Sigmoid colon (tissue), 7 donors: ENCODE measurements at regions of chr11 and their contacts with region 1.

Region 1: DNA sequence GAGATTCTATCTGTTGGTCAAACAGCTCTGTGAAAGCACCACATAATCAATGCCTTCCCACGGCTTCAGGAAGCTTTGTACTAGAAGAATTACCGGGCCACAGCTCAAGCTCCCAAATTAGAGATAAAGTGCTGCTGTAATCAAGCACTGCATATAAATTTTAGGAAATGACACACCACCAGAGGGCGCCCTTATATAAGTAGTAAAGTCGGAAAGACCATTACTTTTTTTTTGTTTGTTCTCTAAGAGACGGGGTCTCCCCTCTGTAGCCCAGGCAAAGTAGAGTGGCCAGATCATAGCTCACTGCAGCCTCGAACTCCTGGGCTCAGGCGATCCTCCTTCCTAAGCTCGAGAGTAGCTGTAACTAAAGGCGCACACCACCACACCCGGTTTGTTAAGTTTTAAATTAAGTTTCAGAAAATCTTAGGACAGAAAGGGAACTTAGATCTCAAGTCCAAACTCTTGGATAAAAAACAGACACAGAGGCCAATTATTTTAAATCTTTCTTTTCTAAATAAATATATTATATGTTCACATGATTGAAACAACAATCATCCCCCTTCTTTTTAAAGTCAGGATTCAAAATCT is 32.6 kb downstream of the PRCP start:
- DNase-seq: peak; percentile 83
- H3K4me3 ChIP-seq: peak overlapping the region in 2 of 4 donors; percentile 10 to 21
- H3K27ac ChIP-seq: no peak overlapping the region
- H3K4me1 ChIP-seq: peaks cover 0 to 37% (median 8%) of the 10 kb centered on the region in 4 donors
- H3K27me3 ChIP-seq: no peaks in the 10 kb centered on the region
- CTCF ChIP-seq: peak in 3 of 4 experiments; percentile 50 to 78 (median 51)
- EP300 ChIP-seq: no peak
- POLR2A ChIP-seq: no peak

Region 2: GRCh38 chr11:82733444-82734119 is 134.0 kb before region 1 on chr11 and contains the start of gene FAM181B:
- intact Hi-C with region 1: loop called (anchors 5 kb)
- DNase-seq: peak; percentile 72
- H3K4me3 ChIP-seq: peak within 1 kb of the TSS; percentile 36 to 60 (median 53)
- H3K27ac ChIP-seq: peak within 1 kb of the TSS; percentile 35 to 66 (median 64)
- H3K4me1 ChIP-seq: peaks cover 0 to 14% (median 11%) of the 10 kb centered on the region in 4 donors
- H3K27me3 ChIP-seq: peaks cover 11 to 55% (median 42%) of the 10 kb centered on the region in 3 donors
- CTCF ChIP-seq: no peak
- EP300 ChIP-seq: no peak
- POLR2A ChIP-seq: no peak
- total RNA-seq, gene FAM181B: 0.83 to 1.4 (median 0.97) TPM

Region 3: DNA sequence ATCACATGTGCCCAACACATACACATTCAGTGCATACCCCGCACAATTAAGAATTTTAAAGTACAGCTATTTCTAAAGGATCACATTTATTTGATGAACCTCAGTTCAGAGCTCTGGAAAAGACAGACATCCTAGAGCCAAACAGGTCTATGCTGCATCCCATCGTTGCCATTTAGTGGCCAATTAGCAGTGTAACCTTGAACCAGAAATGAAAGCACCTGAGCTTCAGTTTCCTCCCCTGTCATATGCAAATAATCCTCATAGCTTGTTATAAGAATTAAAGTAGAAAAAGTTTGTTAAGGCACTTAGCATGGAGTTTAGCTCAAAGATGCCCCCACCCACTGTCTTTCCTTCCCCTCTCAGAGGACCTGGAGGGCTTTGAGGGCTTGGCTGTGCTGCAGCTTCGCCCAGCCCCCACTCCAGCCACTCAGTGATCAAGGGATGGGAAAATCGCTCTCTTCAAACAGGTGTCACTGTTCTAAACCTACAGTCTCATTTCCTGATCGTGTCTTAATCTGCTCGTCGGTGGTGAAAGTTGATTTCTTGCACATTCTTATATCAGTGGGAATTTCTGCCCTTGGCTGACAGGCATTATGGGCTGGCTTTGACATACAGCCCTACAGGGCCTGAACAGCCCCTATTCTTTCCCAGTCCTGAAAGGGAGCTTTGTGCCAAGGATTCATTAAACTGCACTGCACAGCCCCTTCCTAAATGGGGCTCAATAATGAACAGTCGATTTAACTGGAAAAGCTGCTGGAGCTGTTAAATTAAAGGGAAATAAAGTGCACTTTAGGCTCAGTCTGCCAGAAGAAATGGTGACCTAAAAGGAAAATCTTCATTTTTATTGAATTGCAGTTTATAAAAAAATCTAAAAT is 110.6 kb before region 1 on chr11:
- intact Hi-C with region 1: no loop called
- DNase-seq: no peak
- H3K4me3 ChIP-seq: no peak overlapping the region
- H3K27ac ChIP-seq: peak overlapping the region in 2 of 4 donors; percentile 10 to 21
- H3K4me1 ChIP-seq: no peaks in the 10 kb centered on the region
- H3K27me3 ChIP-seq: no peaks in the 10 kb centered on the region
- CTCF ChIP-seq: no peak
- EP300 ChIP-seq: no peak
- POLR2A ChIP-seq: no peak

Region 4: DNA sequence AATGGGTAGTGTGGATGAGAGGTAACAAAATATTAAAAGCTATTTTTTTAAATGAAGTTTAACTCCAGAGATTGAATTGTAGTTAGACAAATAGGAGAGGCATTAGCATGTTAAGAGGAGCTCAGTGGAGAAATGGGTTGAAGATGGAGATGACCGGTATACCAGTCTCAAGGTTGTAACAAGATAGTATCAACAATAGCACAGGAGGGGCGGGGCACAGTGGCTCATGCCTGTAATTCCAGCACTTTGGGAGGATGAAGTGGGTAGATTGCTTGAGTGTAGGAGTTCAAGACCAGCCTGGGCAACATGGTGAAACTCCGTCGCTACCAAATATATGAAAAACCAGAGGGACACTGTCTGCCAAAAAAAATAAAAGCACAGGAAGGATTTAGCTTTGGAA is 319.9 kb after region 1 on chr11:
- intact Hi-C with region 1: no loop called
- DNase-seq: no peak
- H3K4me3 ChIP-seq: no peak overlapping the region
- H3K27ac ChIP-seq: no peak overlapping the region
- H3K4me1 ChIP-seq: peaks cover 0 to 7% (median 6%) of the 10 kb centered on the region in 4 donors
- H3K27me3 ChIP-seq: no peaks in the 10 kb centered on the region
- CTCF ChIP-seq: no peak
- EP300 ChIP-seq: no peak
- POLR2A ChIP-seq: no peak